PC-9 (cell line): ENCODE measurements at regions of chr5 and their contacts with region 1.

Region 1: GRCh38 chr5:33936004-33936380 is 194 bp upstream of the RXFP3 start:
- DNase-seq: peak in 1 of 2 experiments; percentile 21
- H3K4me3 ChIP-seq: no peak overlapping the region
- H3K27ac ChIP-seq: no peak overlapping the region
- H3K4me1 ChIP-seq: peaks cover 14% of the 10 kb centered on the region
- H3K27me3 ChIP-seq: no peaks in the 10 kb centered on the region
- CTCF ChIP-seq: no peak

Region 2: DNA sequence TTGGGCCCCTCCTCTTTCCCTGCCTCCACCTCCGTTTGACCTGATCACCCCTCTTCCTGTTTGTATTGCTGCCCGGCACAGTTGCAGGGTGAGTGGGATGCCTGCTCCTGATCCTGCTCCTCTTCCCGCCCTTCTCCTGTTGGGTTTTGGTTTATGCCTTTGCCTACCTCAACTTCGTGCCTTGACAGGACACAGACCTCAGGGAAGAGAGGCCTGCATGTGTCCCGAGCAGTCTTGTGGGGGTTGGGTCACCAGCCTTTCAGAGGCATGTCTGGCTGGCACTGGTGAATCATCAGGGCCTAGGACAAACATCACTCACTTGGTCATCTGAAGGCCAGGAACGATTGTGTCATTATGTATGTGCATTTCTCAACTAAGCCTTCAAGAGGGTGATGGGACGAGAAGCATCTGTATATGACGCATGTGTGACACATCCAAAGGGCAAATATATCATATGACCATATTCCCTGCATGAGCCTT is 1168.0 kb before region 1 on chr5:
- CTCF ChIA-PET with region 1: no interaction called
- POLR2A ChIA-PET with region 1: no interaction called
- intact Hi-C with region 1: no loop called
- DNase-seq: peak; percentile 89 to 97
- H3K4me3 ChIP-seq: peak overlapping the region; percentile 6; the same call in 1 of the 2 replicates
- H3K27ac ChIP-seq: peak overlapping the region; percentile 74
- H3K4me1 ChIP-seq: peaks cover 18% of the 10 kb centered on the region
- H3K27me3 ChIP-seq: no peaks in the 10 kb centered on the region
- CTCF ChIP-seq: no peak

Region 3: DNA sequence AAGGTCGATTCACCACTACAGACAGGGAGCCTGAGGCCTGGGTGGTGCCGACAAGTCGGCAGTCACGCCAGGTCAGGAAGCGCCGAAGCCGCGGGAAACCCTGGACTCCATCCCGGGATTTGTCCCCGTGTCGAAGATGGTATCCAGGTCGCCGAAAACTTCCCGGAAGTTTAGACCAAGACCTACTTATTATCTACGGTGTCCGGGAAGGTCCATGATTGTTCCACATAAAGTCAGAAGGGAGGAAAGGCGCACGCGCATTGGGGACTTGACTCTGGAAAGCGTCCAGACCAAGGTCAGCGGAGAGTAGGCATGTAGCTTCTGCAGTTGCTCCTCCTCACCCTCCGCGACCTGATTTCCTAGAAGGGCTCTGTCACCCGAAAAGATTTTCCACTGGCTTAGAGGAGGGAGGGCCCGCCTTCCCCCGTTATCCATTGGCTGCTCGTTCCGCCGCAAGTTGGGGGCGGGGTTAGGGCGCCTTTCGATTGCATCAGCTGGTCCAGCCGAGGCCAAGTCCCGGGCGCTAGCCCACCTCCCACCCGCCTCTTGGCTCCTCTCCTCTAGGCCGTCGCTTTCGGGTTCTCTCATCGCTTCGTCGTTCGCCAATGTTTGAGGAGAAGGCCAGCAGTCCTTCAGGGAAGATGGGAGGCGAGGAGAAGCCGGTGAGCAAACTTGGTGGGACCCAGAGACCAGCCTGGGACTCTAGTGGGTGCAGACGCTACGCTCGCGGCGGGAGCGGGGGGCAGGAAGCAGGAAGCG is 495.3 kb before region 1 on chr5 and contains the start of gene TARS1:
- CTCF ChIA-PET with region 1: interaction called, 6 read pairs
- POLR2A ChIA-PET with region 1: no interaction called
- intact Hi-C with region 1: loop called (anchors 1 kb)
- DNase-seq: peak; percentile 100
- H3K4me3 ChIP-seq: peak within 1 kb of the TSS; percentile 88
- H3K27ac ChIP-seq: peak within 1 kb of the TSS; percentile 95
- H3K4me1 ChIP-seq: peaks cover 31% of the 10 kb centered on the region
- H3K27me3 ChIP-seq: no peaks in the 10 kb centered on the region
- CTCF ChIP-seq: no peak
- total RNA-seq, gene TARS1: 477 and 584 TPM in 2 replicates

Region 4: DNA sequence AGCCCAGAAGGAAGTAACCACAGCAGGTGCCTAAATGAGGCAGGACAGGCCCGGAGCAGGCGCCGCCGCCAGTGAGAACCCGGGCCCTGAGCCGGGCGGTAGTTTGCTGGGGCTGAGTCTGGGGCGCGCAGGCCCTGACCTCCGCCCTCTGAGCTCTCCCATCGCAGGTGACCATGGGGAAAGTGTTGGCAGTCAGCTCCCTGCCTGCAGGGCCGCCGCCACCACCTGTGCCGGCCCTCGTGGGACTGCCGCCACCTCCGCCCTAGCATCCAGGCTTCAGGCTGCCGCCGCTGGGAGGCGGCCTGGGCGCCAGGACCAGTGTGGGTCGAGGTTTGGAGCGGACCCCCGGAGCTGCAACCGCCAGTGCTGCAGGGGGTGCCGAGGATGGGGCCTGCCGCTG is 434.1 kb before region 1 on chr5:
- CTCF ChIA-PET with region 1: interaction called, 17 read pairs
- POLR2A ChIA-PET with region 1: no interaction called
- intact Hi-C with region 1: no loop called
- DNase-seq: no peak
- H3K4me3 ChIP-seq: no peak overlapping the region
- H3K27ac ChIP-seq: no peak overlapping the region
- H3K4me1 ChIP-seq: no peaks in the 10 kb centered on the region
- H3K27me3 ChIP-seq: no peaks in the 10 kb centered on the region
- CTCF ChIP-seq: no peak

Region 5: DNA sequence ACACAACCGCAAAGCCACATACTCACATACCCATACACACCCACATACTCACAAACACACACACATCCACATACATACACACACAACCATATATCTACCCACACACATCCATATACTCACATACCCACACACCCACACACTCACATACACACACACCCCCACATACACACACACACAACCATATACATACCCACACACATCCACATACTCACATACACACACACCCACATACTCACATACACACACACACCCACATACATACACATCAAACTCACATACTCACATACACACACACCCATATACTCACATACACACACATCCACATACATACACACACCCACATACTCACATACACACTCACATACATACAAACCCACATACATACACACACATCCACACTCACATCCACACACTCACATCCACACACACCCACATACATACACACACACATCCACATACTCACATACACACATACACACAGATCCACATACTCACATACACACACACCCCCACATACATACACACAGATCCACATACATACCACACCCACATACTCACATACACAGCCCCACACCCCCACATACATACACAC is 264.2 kb before region 1 on chr5:
- CTCF ChIA-PET with region 1: no interaction called
- POLR2A ChIA-PET with region 1: interaction called, 12 read pairs
- intact Hi-C with region 1: no loop called
- DNase-seq: no peak
- H3K4me3 ChIP-seq: no peak overlapping the region
- H3K27ac ChIP-seq: no peak overlapping the region
- H3K4me1 ChIP-seq: no peaks in the 10 kb centered on the region
- H3K27me3 ChIP-seq: no peaks in the 10 kb centered on the region
- CTCF ChIP-seq: no peak

Region 6: DNA sequence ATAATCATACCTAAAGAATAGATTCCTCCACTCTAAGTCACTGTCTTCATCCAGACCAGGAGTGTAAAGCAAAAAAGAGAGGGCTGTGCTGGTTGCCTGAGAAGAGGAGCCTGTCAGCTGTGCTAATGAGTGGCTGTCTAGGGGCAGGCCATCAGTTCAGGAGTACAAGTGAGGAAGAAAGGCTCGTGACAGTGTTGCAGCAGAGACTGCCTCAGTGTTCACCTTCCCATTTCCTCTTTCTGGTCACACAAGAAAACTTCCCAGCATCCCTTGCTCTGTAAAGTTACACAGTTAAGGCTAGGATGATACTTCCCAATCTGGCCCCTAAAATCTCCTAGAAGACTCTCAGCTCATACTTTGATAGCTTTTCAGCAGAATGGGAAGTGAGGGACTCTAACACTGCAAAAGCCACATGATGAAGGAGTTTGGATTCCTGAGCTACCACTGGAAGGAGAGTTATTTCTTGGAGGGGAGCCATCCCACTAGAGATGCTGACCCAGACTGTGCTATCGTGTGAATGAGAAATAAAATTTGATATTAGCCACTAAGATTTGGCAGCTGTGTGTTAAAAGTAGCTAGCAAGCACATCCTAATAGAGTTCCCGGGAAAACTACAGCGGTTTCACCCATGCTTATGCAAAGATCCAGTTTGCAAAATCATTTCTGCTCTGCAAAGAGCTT is 111.3 kb before region 1 on chr5:
- CTCF ChIA-PET with region 1: interaction called, 6 read pairs
- POLR2A ChIA-PET with region 1: interaction called, 38 read pairs
- intact Hi-C with region 1: no loop called
- DNase-seq: no peak
- H3K4me3 ChIP-seq: no peak overlapping the region
- H3K27ac ChIP-seq: no peak overlapping the region
- H3K4me1 ChIP-seq: peaks cover 24% of the 10 kb centered on the region
- H3K27me3 ChIP-seq: no peaks in the 10 kb centered on the region
- CTCF ChIP-seq: no peak

Region 7: DNA sequence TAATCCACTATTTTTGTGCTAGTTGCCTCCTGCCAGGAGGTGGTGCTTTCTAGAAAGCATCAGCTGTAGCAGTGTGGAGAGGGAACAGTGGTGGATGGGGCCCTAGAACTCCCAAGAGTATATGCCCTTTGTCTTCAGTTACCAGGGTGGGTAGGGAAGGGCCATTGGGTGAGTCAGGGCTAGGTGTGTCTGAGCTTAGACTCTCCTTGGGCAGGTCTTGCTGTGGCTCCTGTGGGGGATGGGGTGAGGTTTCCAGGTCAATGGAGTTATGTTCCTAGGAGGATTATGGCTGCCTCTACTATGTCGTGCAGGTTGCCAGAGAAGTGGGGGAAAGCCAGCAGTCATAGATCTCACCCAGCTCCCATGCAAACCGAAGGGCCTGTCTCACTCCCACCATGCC is 32.9 kb before region 1 on chr5:
- CTCF ChIA-PET with region 1: interaction called, 5 read pairs
- POLR2A ChIA-PET with region 1: no interaction called
- intact Hi-C with region 1: loop called (anchors 1 kb)
- DNase-seq: peak; percentile 92 to 94
- H3K4me3 ChIP-seq: peak overlapping the region; percentile 22; the same call in 1 of the 2 replicates
- H3K27ac ChIP-seq: peak overlapping the region; percentile 72
- H3K4me1 ChIP-seq: peaks cover 36% of the 10 kb centered on the region
- H3K27me3 ChIP-seq: no peaks in the 10 kb centered on the region
- CTCF ChIP-seq: no peak; the same call in 1 of the 2 replicates